Caco-2 (cell line): ENCODE measurements at regions of chr9 and their contacts with region 1.

Region 1: DNA sequence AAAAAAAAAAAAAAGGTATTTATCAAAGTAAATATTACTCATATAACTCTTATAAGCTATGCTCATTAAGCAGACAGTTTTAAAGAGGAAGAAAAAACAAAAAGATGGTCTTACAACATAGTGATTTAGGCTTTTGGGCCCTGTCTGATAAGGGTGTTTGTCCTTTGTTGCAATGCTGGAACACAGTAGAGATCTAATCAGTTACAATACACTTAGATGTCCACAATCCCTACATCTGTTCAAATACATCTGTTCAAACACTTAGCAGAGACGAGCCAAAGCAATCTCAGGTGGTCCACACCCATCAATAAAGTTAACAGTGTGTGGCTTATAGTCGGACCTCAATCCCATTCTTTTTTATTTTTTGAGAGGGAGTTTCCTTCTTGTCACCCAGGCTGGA is 11.0 kb downstream of the PRXL2C start:
- DNase-seq: peak; percentile 69 to 77
- H3K4me3 ChIP-seq: no peak overlapping the region
- H3K4me3 Mint-ChIP-seq: no peak overlapping the region
- H3K27ac Mint-ChIP-seq: no peak overlapping the region
- H3K4me1 ChIP-seq: peaks cover 18% of the 10 kb centered on the region; the same call in 1 of the 2 replicates
- H3K4me1 Mint-ChIP-seq: peaks cover 13% of the 10 kb centered on the region
- H3K27me3 ChIP-seq: no peaks in the 10 kb centered on the region
- H3K27me3 Mint-ChIP-seq: no peaks in the 10 kb centered on the region
- CTCF ChIP-seq: no peak

Region 2: GRCh38 chr9:95852059-95853032 is 791.8 kb before region 1 on chr9:
- CTCF ChIA-PET with region 1: no interaction called
- POLR2A ChIA-PET with region 1: no interaction called
- intact Hi-C with region 1: no loop called
- DNase-seq: no peak
- H3K4me3 ChIP-seq: no peak overlapping the region
- H3K4me3 Mint-ChIP-seq: no peak overlapping the region
- H3K27ac Mint-ChIP-seq: no peak overlapping the region
- H3K4me1 ChIP-seq: peaks cover 7% of the 10 kb centered on the region; the same call in 1 of the 2 replicates
- H3K4me1 Mint-ChIP-seq: no peaks in the 10 kb centered on the region
- H3K27me3 ChIP-seq: no peaks in the 10 kb centered on the region
- H3K27me3 Mint-ChIP-seq: no peaks in the 10 kb centered on the region
- CTCF ChIP-seq: no peak

Region 3: DNA sequence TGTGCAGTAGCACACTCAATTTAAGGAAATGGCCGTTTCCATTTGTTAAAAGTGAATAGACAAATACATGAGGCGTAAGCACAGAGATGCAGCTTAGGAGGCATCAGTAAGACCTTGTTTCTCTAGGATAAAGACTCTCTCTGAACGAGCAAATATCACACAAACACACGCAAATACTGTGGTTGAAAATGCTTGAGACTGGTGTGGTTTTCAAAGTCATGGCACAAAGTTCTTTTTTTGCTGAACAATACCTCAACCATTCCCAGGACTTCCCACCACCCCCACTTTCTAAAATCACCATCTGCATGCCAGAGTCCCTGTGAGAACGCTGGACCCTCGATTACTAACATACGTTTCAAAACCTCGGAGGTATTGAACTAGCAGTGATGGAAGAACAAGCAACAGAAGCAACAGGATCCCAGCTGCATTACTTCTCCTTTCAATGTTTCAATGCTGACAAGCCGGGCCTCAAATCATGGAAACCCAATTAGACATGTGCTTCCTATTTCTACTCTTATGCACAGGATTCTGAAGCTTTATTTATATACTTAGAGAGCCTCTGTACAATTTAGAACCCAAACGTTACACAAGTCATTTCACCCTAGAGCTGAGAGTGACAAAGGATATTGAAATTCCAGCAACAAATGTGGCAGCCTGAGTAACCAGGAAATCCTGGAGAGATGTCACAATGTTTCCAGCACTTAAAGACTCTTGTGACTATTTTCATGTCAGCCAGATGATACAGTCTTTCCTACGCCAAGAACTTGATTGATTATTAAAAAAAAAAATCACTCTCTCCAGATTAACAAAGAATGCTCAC is 88.4 kb before region 1 on chr9:
- CTCF ChIA-PET with region 1: no interaction called
- POLR2A ChIA-PET with region 1: no interaction called
- intact Hi-C with region 1: loop called (anchors 1 kb)
- DNase-seq: no peak
- H3K4me3 ChIP-seq: no peak overlapping the region
- H3K4me3 Mint-ChIP-seq: no peak overlapping the region
- H3K27ac Mint-ChIP-seq: no peak overlapping the region
- H3K4me1 ChIP-seq: peaks cover 51% of the 10 kb centered on the region
- H3K4me1 Mint-ChIP-seq: peaks cover 56% of the 10 kb centered on the region
- H3K27me3 ChIP-seq: no peaks in the 10 kb centered on the region
- H3K27me3 Mint-ChIP-seq: no peaks in the 10 kb centered on the region
- CTCF ChIP-seq: no peak

Region 4: GRCh38 chr9:96619491-96620154 is 24.5 kb before region 1 on chr9 and contains the start of gene CDC14B:
- CTCF ChIA-PET with region 1: no interaction called
- POLR2A ChIA-PET with region 1: interaction called, 6 read pairs
- intact Hi-C with region 1: loop called (anchors 1 kb)
- DNase-seq: peak; percentile 94 to 98
- H3K4me3 ChIP-seq: peak within 1 kb of the TSS; percentile 91
- H3K4me3 Mint-ChIP-seq: peak within 1 kb of the TSS; percentile 91
- H3K27ac Mint-ChIP-seq: peak within 1 kb of the TSS; percentile 82
- H3K4me1 ChIP-seq: peaks cover 18% of the 10 kb centered on the region
- H3K4me1 Mint-ChIP-seq: peaks cover 29% of the 10 kb centered on the region
- H3K27me3 ChIP-seq: no peaks in the 10 kb centered on the region
- H3K27me3 Mint-ChIP-seq: no peaks in the 10 kb centered on the region
- CTCF ChIP-seq: peak in 1 of 2 experiments; percentile 5
- total RNA-seq, gene CDC14B: 81.4 and 82.3 TPM in 2 replicates

Region 5: GRCh38 chr9:96654443-96655197 is 10.5 kb after region 1 on chr9:
- CTCF ChIA-PET with region 1: interaction called, 6 read pairs
- POLR2A ChIA-PET with region 1: interaction called, 9 read pairs
- intact Hi-C with region 1: loop called (anchors 1 kb)
- DNase-seq: peak; percentile 73 to 77
- H3K4me3 ChIP-seq: peak overlapping the region; percentile 91
- H3K4me3 Mint-ChIP-seq: peak overlapping the region; percentile 87
- H3K27ac Mint-ChIP-seq: peak overlapping the region; percentile 88
- H3K4me1 ChIP-seq: peaks cover 4% of the 10 kb centered on the region; the same call in 1 of the 2 replicates
- H3K4me1 Mint-ChIP-seq: peaks cover 25% of the 10 kb centered on the region
- H3K27me3 ChIP-seq: no peaks in the 10 kb centered on the region
- H3K27me3 Mint-ChIP-seq: no peaks in the 10 kb centered on the region
- CTCF ChIP-seq: no peak

Region 6: DNA sequence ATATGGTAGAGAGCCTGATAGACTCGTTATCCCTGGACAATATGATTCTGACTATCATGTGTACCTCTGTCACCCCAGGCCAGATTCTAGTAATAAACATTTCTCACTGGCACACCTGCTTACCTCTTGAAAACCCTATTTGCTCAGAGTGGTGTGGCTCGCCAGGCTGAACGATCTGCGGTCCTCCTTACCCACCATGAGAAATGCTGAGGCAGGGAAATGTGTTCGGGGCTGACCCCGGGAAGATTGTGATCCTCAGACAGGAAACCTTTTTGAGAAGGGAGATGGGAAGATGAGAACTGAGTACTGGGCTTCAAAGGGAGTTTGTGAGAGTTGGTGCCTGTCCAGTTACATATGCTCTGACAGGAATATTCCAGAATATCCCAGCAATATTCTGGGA is 21.7 kb after region 1 on chr9:
- CTCF ChIA-PET with region 1: no interaction called
- POLR2A ChIA-PET with region 1: no interaction called
- intact Hi-C with region 1: no loop called
- DNase-seq: no peak
- H3K4me3 ChIP-seq: no peak overlapping the region
- H3K4me3 Mint-ChIP-seq: no peak overlapping the region
- H3K27ac Mint-ChIP-seq: peak overlapping the region; percentile 55
- H3K4me1 ChIP-seq: peaks cover 10% of the 10 kb centered on the region
- H3K4me1 Mint-ChIP-seq: peaks cover 9% of the 10 kb centered on the region
- H3K27me3 ChIP-seq: no peaks in the 10 kb centered on the region
- H3K27me3 Mint-ChIP-seq: no peaks in the 10 kb centered on the region
- CTCF ChIP-seq: no peak